ENCODE measurements at regions of chr1 and their contacts with region 1.

Region 1: DNA sequence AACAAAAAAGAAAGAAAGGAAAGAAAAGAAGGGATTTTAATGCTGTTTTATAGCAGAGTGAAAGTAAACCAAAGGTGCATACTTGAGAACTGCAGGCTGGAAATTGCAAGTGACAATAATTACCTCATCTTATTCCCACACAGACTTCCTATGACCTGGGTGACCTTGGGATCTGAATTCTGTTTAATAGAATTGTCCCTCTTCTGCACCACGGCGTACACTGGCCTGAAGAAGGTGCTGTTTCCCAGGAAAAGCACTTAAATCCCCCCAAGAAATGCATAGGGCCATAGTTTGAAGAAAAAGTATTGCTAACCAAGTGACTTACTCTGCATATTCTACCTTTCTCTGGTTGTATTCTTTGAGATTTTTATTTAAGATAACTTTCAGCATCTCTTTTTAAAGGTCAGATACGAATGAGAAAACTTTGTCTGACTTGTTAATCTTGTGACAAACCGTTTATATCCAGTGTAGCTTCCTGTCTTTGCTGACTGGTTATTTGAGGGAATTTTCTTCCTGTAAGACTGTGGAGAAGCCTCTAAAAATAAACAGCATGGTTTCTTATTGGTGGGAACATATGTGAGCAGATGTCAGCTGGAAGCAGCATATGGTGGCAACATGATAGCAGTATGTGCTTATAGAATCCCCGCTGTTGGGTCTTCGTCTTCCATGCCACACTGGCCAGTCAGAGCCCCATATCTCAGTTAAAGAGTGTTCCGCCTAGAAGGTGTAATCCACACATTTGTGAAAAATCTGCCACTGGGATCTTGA is 16.3 kb downstream of the TGFB2 start:
- DNase-seq: peak; percentile 80
- H3K4me3 Mint-ChIP-seq: no peak overlapping the region
- H3K27ac Mint-ChIP-seq: no peak overlapping the region
- H3K4me1 Mint-ChIP-seq: no peaks in the 10 kb centered on the region
- H3K27me3 Mint-ChIP-seq: no peaks in the 10 kb centered on the region
- CTCF ChIP-seq: peak; percentile 68

Region 2: DNA sequence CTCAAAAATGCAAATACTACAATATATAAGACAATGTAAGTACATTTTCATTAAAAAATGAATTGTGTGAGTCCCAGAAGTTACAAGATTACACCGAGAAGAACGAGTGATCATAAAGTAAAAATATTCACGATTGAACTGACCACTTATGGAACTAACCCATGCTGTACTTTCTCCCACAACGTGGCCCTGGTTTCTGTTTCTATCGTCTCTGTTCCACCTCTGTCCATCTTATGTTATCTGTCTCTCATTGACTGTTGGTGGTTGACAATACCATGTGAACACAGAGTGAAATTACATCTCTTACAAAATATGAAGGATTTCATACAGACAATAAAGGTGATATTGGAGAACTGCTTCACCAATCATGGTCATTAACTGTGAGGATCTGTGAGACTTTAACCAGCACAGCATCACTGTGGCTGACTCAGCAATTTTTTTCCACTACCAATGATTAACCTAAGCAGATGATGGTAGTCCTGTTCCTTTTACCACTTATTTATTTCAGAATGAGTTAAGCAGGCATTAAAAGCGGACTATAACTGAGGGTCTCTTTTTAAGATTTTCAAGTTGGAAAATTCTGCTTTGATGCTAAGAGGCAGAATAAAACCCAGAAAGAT is 148.8 kb after region 1 on chr1:
- CTCF ChIA-PET with region 1: no interaction called
- POLR2A ChIA-PET with region 1: no interaction called
- intact Hi-C with region 1: no loop called
- DNase-seq: no peak
- H3K4me3 Mint-ChIP-seq: no peak overlapping the region
- H3K27ac Mint-ChIP-seq: no peak overlapping the region
- H3K4me1 Mint-ChIP-seq: no peaks in the 10 kb centered on the region
- H3K27me3 Mint-ChIP-seq: no peaks in the 10 kb centered on the region
- CTCF ChIP-seq: no peak

Region 3: DNA sequence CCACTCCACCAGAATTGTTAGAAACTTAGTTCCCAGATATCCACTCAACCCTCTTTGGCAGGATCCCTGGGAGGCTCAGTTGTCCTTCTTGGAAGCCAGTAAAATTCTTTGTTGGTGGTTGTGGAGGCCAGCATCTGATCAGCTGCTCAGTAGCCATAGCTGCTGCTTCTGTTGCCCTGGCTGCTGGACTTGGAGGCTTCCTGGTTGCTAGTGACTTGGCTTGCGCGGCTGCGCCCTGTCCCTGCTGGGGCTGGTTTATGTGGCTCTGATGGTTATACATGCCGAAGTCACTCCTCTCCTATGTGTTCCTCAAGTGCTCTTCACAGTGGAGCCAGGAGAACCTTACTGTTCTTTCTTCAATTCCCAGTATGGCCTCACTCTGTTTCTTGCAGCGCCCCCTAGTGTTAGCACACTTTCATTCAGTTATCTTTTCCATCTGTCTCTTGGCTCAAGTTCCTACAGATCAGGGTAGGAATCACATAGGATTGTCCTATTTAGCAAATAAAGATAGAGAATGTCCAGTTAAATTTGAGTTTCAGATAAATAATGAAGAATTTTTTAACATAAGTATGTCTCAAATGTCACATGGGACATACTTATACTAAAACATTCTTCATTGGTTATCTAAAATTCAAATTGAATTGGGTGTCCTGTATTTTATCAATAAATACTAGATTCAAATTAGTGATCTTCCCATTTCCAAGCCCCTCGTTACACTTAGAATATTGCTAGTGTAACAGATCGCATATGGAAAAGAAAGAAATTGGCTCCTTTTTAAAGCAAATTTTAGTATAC is 160.1 kb after region 1 on chr1:
- CTCF ChIA-PET with region 1: interaction called, 3 read pairs
- POLR2A ChIA-PET with region 1: no interaction called
- intact Hi-C with region 1: loop called (anchors 1 kb)
- DNase-seq: peak; percentile 92
- H3K4me3 Mint-ChIP-seq: no peak overlapping the region
- H3K27ac Mint-ChIP-seq: no peak overlapping the region
- H3K4me1 Mint-ChIP-seq: peaks cover 13% of the 10 kb centered on the region
- H3K27me3 Mint-ChIP-seq: no peaks in the 10 kb centered on the region
- CTCF ChIP-seq: peak; percentile 90

Region 4: DNA sequence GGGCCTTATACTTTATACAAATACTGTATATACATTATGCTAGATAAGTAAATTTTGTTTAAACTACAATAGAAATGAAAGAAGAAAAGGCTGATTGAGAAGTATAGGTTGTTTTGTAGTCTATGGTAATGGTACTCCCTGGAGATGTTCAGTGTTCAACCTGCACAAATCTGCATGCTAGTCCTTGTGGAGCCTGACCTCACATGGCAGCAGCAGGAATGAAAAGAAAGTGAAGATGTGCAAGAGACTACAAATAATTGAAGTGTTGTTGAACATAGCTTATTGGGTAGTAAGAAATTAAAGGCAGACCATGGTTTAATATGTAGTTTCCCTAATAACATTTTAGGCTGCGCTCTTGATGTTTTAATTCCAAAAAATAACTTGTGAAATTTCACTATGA is 184.8 kb after region 1 on chr1:
- CTCF ChIA-PET with region 1: no interaction called
- POLR2A ChIA-PET with region 1: no interaction called
- intact Hi-C with region 1: loop called (anchors 1 kb)
- DNase-seq: peak; percentile 42
- H3K4me3 Mint-ChIP-seq: no peak overlapping the region
- H3K27ac Mint-ChIP-seq: no peak overlapping the region
- H3K4me1 Mint-ChIP-seq: no peaks in the 10 kb centered on the region
- H3K27me3 Mint-ChIP-seq: no peaks in the 10 kb centered on the region
- CTCF ChIP-seq: peak; percentile 46